ENCODE measurements at regions of chr4 and their contacts with region 1.

Region 1: GRCh38 chr4:36351082-36351666 is 69.8 kb downstream of the DTHD1 start:
- DNase-seq: peak; percentile 45 to 76 (median 68)
- ATAC-seq: peak; percentile 91
- H3K4me3 ChIP-seq: no peak overlapping the region
- H3K4me3 Mint-ChIP-seq: no peak overlapping the region
- H3K27ac ChIP-seq: no peak overlapping the region
- H3K27ac Mint-ChIP-seq: peak overlapping the region in 1 of 9 donors; percentile 4
- H3K4me1 ChIP-seq: no peaks in the 10 kb centered on the region
- H3K4me1 Mint-ChIP-seq: peaks cover 0 to 31% (median 0%) of the 10 kb centered on the region in 7 donors
- H3K27me3 ChIP-seq: no peaks in the 10 kb centered on the region
- H3K27me3 Mint-ChIP-seq: peaks cover 0 to 19% (median 0%) of the 10 kb centered on the region in 5 donors

Region 2: GRCh38 chr4:36123906-36124305 is 227.3 kb before region 1 on chr4:
- CTCF ChIA-PET with region 1: no interaction called
- POLR2A ChIA-PET with region 1: no interaction called
- intact Hi-C with region 1: no loop called
- DNase-seq: no peak
- ATAC-seq: no peak
- H3K4me3 ChIP-seq: no peak overlapping the region
- H3K4me3 Mint-ChIP-seq: no peak overlapping the region
- H3K27ac ChIP-seq: no peak overlapping the region
- H3K27ac Mint-ChIP-seq: no peak overlapping the region
- H3K4me1 ChIP-seq: no peaks in the 10 kb centered on the region
- H3K4me1 Mint-ChIP-seq: peaks cover 0 to 2% (median 0%) of the 10 kb centered on the region in 7 donors
- H3K27me3 ChIP-seq: no peaks in the 10 kb centered on the region
- H3K27me3 Mint-ChIP-seq: no peaks in the 10 kb centered on the region

Region 3: DNA sequence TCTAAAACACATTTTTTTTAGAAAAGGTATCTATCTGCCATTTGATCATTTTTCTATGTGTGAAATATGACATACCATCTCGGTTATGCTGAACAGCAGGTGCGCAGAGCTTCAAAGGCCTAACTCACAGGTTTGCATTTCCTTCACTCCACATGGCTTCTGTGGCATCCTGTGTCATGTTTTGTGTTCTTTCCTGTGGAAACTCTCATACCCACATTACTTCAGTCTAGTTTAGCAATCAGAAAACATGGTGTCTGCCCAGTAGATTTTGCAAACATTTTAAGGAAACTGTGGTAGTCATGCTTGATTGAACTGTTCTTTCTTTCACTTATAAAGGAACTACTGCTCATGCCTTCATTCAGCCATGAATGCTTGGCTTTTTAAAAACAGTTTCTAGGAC is 95.6 kb before region 1 on chr4:
- CTCF ChIA-PET with region 1: no interaction called
- POLR2A ChIA-PET with region 1: no interaction called
- intact Hi-C with region 1: loop called in 1 of 2 experiments (anchors 1 kb)
- DNase-seq: peak in 8 of 9 donors; percentile 46 to 90 (median 86)
- ATAC-seq: peak; percentile 98
- H3K4me3 ChIP-seq: no peak overlapping the region
- H3K4me3 Mint-ChIP-seq: peak overlapping the region; percentile 22 to 85 (median 68)
- H3K27ac ChIP-seq: peak overlapping the region; percentile 53
- H3K27ac Mint-ChIP-seq: peak overlapping the region; percentile 74 to 96 (median 86)
- H3K4me1 ChIP-seq: peaks cover 10 to 49% of the 10 kb centered on the region in 2 donors
- H3K4me1 Mint-ChIP-seq: peaks cover 22 to 40% (median 34%) of the 10 kb centered on the region in 7 donors
- H3K27me3 ChIP-seq: no peaks in the 10 kb centered on the region
- H3K27me3 Mint-ChIP-seq: peaks cover 0 to 4% (median 0%) of the 10 kb centered on the region in 5 donors

Region 4: GRCh38 chr4:36310793-36311192 is 40.4 kb before region 1 on chr4:
- CTCF ChIA-PET with region 1: no interaction called
- POLR2A ChIA-PET with region 1: no interaction called
- intact Hi-C with region 1: no loop called
- DNase-seq: no peak
- ATAC-seq: peak; percentile 86
- H3K4me3 ChIP-seq: no peak overlapping the region
- H3K4me3 Mint-ChIP-seq: peak overlapping the region in 9 of 10 donors; percentile 22 to 78 (median 49)
- H3K27ac ChIP-seq: no peak overlapping the region
- H3K27ac Mint-ChIP-seq: peak overlapping the region in 2 of 9 donors; percentile 41 to 63
- H3K4me1 ChIP-seq: peaks cover 3 to 11% of the 10 kb centered on the region in 2 donors
- H3K4me1 Mint-ChIP-seq: peaks cover 6 to 27% (median 19%) of the 10 kb centered on the region in 7 donors
- H3K27me3 ChIP-seq: no peaks in the 10 kb centered on the region
- H3K27me3 Mint-ChIP-seq: peaks cover 0 to 2% (median 0%) of the 10 kb centered on the region in 5 donors

Region 5: DNA sequence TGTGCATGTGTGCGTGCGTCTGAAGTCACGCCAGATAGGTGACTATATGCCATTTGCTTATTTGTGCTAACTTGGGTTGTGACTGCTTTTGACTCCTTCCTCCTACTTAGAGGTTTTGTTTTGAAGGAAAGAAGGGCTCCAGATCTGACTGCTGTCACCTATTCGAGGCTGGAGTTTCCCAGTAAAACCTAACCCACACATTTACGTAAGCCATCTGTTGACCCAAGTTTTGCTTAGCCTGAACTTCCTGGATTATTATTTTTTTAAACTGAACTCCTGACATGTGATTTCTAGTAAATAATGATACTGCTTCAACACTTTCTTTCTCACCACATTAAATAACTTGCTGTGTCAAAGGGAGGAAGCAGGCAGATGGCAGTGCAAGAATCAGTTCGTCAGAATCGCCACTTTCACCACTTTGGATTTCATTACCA is 28.2 kb before region 1 on chr4:
- CTCF ChIA-PET with region 1: no interaction called
- POLR2A ChIA-PET with region 1: no interaction called
- intact Hi-C with region 1: loop called in 1 of 2 experiments (anchors 1 kb)
- DNase-seq: peak in 8 of 9 donors; percentile 37 to 81 (median 66)
- ATAC-seq: peak; percentile 86
- H3K4me3 ChIP-seq: peak overlapping the region; percentile 6
- H3K4me3 Mint-ChIP-seq: peak overlapping the region in 9 of 10 donors; percentile 51 to 79 (median 65)
- H3K27ac ChIP-seq: no peak overlapping the region
- H3K27ac Mint-ChIP-seq: peak overlapping the region; percentile 44 to 87 (median 72)
- H3K4me1 ChIP-seq: peaks cover 24 to 37% of the 10 kb centered on the region in 2 donors
- H3K4me1 Mint-ChIP-seq: peaks cover 32 to 76% (median 41%) of the 10 kb centered on the region in 7 donors
- H3K27me3 ChIP-seq: no peaks in the 10 kb centered on the region
- H3K27me3 Mint-ChIP-seq: no peaks in the 10 kb centered on the region

Region 6: DNA sequence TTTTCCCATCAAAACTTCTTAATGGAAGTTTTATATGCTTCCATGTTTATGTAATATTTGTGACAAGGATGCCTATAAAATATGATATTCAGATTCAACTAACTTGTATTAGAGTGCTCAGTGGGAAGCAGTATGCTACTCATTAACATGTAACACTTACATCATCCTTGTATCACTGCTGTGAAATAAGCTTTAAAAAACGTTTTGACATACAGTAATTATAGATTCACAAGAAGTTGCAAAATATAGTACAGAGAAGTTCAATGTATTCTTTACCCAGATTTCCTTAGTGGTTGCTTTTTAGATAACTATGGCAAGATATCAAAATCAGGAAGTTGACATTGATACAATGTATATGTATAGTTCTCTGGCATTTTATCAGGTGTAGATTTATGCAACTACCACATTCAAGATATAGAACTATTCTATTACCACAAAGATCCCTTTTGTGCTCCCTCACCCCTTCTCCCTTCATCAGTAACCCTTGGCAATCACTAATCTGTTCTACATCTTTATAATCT is 13.4 kb before region 1 on chr4:
- CTCF ChIA-PET with region 1: no interaction called
- POLR2A ChIA-PET with region 1: no interaction called
- intact Hi-C with region 1: no loop called
- DNase-seq: no peak
- ATAC-seq: peak; percentile 26
- H3K4me3 ChIP-seq: no peak overlapping the region
- H3K4me3 Mint-ChIP-seq: no peak overlapping the region
- H3K27ac ChIP-seq: no peak overlapping the region
- H3K27ac Mint-ChIP-seq: no peak overlapping the region
- H3K4me1 ChIP-seq: peaks cover 5 to 8% of the 10 kb centered on the region in 2 donors
- H3K4me1 Mint-ChIP-seq: peaks cover 5 to 26% (median 10%) of the 10 kb centered on the region in 7 donors
- H3K27me3 ChIP-seq: no peaks in the 10 kb centered on the region
- H3K27me3 Mint-ChIP-seq: no peaks in the 10 kb centered on the region

Region 7: DNA sequence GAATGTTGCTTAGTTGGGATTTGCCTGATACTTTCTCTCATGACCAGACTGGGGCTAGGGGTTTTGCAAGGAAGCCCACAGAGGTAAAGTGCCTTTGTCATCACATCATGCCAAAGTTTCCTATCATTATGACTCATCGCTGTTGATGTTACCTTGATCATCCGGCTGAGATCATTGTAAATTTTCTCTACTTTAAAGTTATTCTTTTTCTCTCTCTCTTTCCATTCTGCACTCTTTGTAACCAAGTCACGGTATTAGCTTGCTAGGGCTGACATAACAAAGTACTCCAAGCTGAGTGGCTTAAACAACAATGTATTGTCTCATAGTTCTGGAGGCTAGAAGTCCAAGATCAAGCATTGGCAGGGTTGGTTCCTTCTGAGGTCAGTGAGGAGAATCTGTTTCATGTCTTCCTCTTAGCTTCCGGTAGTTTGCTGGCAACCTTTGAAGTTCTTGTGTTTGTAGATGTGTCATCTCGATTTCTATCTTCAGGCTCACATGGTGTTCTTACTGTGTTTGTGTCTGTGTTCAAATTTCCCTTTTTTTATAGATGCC is 43.3 kb after region 1 on chr4:
- CTCF ChIA-PET with region 1: interaction called, 62 read pairs
- POLR2A ChIA-PET with region 1: interaction called, 3 read pairs
- intact Hi-C with region 1: loop called (anchors 1 kb)
- DNase-seq: peak in 8 of 9 donors; percentile 33 to 84 (median 71)
- ATAC-seq: peak; percentile 92
- H3K4me3 ChIP-seq: no peak overlapping the region
- H3K4me3 Mint-ChIP-seq: peak overlapping the region in 6 of 10 donors; percentile 27 to 76 (median 50)
- H3K27ac ChIP-seq: no peak overlapping the region
- H3K27ac Mint-ChIP-seq: peak overlapping the region; percentile 83 to 96 (median 88)
- H3K4me1 ChIP-seq: peaks cover 5 to 11% of the 10 kb centered on the region in 2 donors
- H3K4me1 Mint-ChIP-seq: peaks cover 0 to 24% (median 15%) of the 10 kb centered on the region in 7 donors
- H3K27me3 ChIP-seq: no peaks in the 10 kb centered on the region
- H3K27me3 Mint-ChIP-seq: peaks cover 0 to 14% (median 0%) of the 10 kb centered on the region in 5 donors

Region 8: DNA sequence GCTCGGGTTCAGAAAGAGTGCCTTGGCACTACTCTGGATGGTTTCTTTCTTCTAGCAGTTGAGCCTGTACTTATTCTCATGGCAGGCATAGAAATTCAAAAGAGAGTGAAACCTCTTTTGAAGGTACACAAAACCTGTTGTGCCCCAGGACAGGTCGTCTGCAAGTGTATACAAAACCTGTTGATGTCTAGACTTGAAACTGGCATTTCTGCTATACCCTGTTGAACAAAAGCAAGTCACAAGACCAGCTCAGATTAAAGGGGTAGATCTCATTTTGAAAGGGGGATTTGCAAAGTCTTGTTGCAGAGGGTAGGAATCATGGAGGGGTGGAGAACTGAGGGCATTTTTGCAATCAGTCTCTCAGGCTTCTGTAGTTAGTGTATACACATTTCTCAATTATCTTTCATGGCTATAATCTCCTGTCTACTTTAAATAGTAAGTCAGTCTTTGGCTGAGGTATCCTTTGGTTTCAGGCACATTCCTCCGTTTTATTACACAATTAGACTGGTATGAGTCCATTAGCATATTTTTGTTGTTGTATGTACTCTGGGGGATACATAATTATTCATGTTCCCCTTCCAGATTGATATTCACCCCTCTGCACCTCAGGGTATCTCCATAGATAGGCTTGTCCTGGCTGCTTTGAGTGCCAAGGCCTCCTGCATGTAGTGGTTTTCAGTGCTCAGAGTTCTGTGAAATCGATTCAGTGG is 181.7 kb after region 1 on chr4:
- CTCF ChIA-PET with region 1: no interaction called
- POLR2A ChIA-PET with region 1: no interaction called
- intact Hi-C with region 1: no loop called
- DNase-seq: no peak
- ATAC-seq: no peak
- H3K4me3 ChIP-seq: no peak overlapping the region
- H3K4me3 Mint-ChIP-seq: no peak overlapping the region
- H3K27ac ChIP-seq: no peak overlapping the region
- H3K27ac Mint-ChIP-seq: no peak overlapping the region
- H3K4me1 ChIP-seq: no peaks in the 10 kb centered on the region
- H3K4me1 Mint-ChIP-seq: no peaks in the 10 kb centered on the region
- H3K27me3 ChIP-seq: no peaks in the 10 kb centered on the region
- H3K27me3 Mint-ChIP-seq: peaks cover 0 to 8% (median 3%) of the 10 kb centered on the region in 5 donors

Region 9: GRCh38 chr4:37389967-37390580 is 1038.9 kb after region 1 on chr4:
- CTCF ChIA-PET with region 1: no interaction called
- POLR2A ChIA-PET with region 1: no interaction called
- intact Hi-C with region 1: loop called (anchors 1 to 5 kb)
- DNase-seq: peak in 6 of 9 donors; percentile 14 to 33 (median 23)
- ATAC-seq: peak; percentile 68
- H3K4me3 ChIP-seq: no peak overlapping the region
- H3K4me3 Mint-ChIP-seq: no peak overlapping the region
- H3K27ac ChIP-seq: no peak overlapping the region
- H3K27ac Mint-ChIP-seq: no peak overlapping the region
- H3K4me1 ChIP-seq: no peaks in the 10 kb centered on the region
- H3K4me1 Mint-ChIP-seq: peaks cover 0 to 7% (median 0%) of the 10 kb centered on the region in 7 donors
- H3K27me3 ChIP-seq: no peaks in the 10 kb centered on the region
- H3K27me3 Mint-ChIP-seq: peaks cover 0 to 10% (median 7%) of the 10 kb centered on the region in 5 donors

Region 10: GRCh38 chr4:37793562-37793961 is 1442.4 kb after region 1 on chr4:
- CTCF ChIA-PET with region 1: no interaction called
- POLR2A ChIA-PET with region 1: no interaction called
- intact Hi-C with region 1: loop called in 1 of 2 experiments (anchors 5 kb)
- DNase-seq: peak in 5 of 9 donors; percentile 33 to 44 (median 39)
- ATAC-seq: peak; percentile 80
- H3K4me3 ChIP-seq: no peak overlapping the region
- H3K4me3 Mint-ChIP-seq: no peak overlapping the region
- H3K27ac ChIP-seq: no peak overlapping the region
- H3K27ac Mint-ChIP-seq: peak overlapping the region in 1 of 9 donors; percentile 49
- H3K4me1 ChIP-seq: no peaks in the 10 kb centered on the region
- H3K4me1 Mint-ChIP-seq: peaks cover 0 to 3% (median under 1%) of the 10 kb centered on the region in 7 donors
- H3K27me3 ChIP-seq: no peaks in the 10 kb centered on the region
- H3K27me3 Mint-ChIP-seq: peaks cover 0 to 22% (median 0%) of the 10 kb centered on the region in 5 donors

Measured in naive thymus-derived CD4-positive, alpha-beta T cell (primary cell).